CD4-positive, alpha-beta T cell (primary cell): ENCODE measurements at regions of chr16 and their contacts with region 1.

Region 1: GRCh38 chr16:1331712-1332617 is 1.5 kb upstream of the BAIAP3 start:
- DNase-seq: peak in 8 of 14 experiments; percentile 28 to 77 (median 40)
- ATAC-seq: peak; percentile 28
- H3K4me3 ChIP-seq: peak overlapping the region; percentile 45
- H3K4me3 Mint-ChIP-seq: peak overlapping the region; percentile 85
- H3K27ac ChIP-seq: peak overlapping the region in 1 of 2 donors; percentile 44
- H3K27ac Mint-ChIP-seq: no peak overlapping the region
- H3K4me1 ChIP-seq: peaks cover 47% of the 10 kb centered on the region
- H3K4me1 Mint-ChIP-seq: peaks cover 12% of the 10 kb centered on the region
- H3K27me3 ChIP-seq: peaks cover 31 to 44% of the 10 kb centered on the region in 2 experiments
- H3K27me3 Mint-ChIP-seq: peaks cover 21% of the 10 kb centered on the region
- CTCF ChIP-seq: no peak

Region 2: GRCh38 chr16:149024-149662 is 1182.8 kb before region 1 on chr16:
- CTCF ChIA-PET with region 1: no interaction called
- POLR2A ChIA-PET with region 1: no interaction called
- intact Hi-C with region 1: no loop called
- DNase-seq: no peak
- ATAC-seq: no peak
- H3K4me3 ChIP-seq: no peak overlapping the region
- H3K4me3 Mint-ChIP-seq: no peak overlapping the region
- H3K27ac ChIP-seq: no peak overlapping the region
- H3K27ac Mint-ChIP-seq: no peak overlapping the region
- H3K4me1 ChIP-seq: peaks cover under 1% of the 10 kb centered on the region
- H3K4me1 Mint-ChIP-seq: no peaks in the 10 kb centered on the region
- H3K27me3 ChIP-seq: peaks cover 0 to 2% of the 10 kb centered on the region in 2 experiments
- H3K27me3 Mint-ChIP-seq: peaks cover 42% of the 10 kb centered on the region
- CTCF ChIP-seq: no peak

Region 3: GRCh38 chr16:1216296-1216619 is 115.7 kb before region 1 on chr16:
- CTCF ChIA-PET with region 1: no interaction called
- POLR2A ChIA-PET with region 1: no interaction called
- intact Hi-C with region 1: no loop called
- DNase-seq: no peak
- ATAC-seq: no peak
- H3K4me3 ChIP-seq: no peak overlapping the region
- H3K4me3 Mint-ChIP-seq: no peak overlapping the region
- H3K27ac ChIP-seq: no peak overlapping the region
- H3K27ac Mint-ChIP-seq: no peak overlapping the region
- H3K4me1 ChIP-seq: no peaks in the 10 kb centered on the region
- H3K4me1 Mint-ChIP-seq: no peaks in the 10 kb centered on the region
- H3K27me3 ChIP-seq: no peaks in the 10 kb centered on the region
- H3K27me3 Mint-ChIP-seq: no peaks in the 10 kb centered on the region
- CTCF ChIP-seq: no peak

Region 4: GRCh38 chr16:1342526-1343427 is 10.8 kb after region 1 on chr16:
- CTCF ChIA-PET with region 1: interaction called, 5 read pairs
- POLR2A ChIA-PET with region 1: interaction called, 15 read pairs
- intact Hi-C with region 1: no loop called
- DNase-seq: peak; percentile 92 to 99 (median 96)
- ATAC-seq: peak; percentile 93
- H3K4me3 ChIP-seq: peak overlapping the region; percentile 53
- H3K4me3 Mint-ChIP-seq: peak overlapping the region; percentile 66
- H3K27ac ChIP-seq: peak overlapping the region in 1 of 2 donors; percentile 29
- H3K27ac Mint-ChIP-seq: peak overlapping the region; percentile 50
- H3K4me1 ChIP-seq: peaks cover 26% of the 10 kb centered on the region
- H3K4me1 Mint-ChIP-seq: peaks cover 13% of the 10 kb centered on the region
- H3K27me3 ChIP-seq: no peaks in the 10 kb centered on the region
- H3K27me3 Mint-ChIP-seq: no peaks in the 10 kb centered on the region
- CTCF ChIP-seq: no peak